ENCODE measurements at regions of chr16 and their contacts with region 1.

Region 1: DNA sequence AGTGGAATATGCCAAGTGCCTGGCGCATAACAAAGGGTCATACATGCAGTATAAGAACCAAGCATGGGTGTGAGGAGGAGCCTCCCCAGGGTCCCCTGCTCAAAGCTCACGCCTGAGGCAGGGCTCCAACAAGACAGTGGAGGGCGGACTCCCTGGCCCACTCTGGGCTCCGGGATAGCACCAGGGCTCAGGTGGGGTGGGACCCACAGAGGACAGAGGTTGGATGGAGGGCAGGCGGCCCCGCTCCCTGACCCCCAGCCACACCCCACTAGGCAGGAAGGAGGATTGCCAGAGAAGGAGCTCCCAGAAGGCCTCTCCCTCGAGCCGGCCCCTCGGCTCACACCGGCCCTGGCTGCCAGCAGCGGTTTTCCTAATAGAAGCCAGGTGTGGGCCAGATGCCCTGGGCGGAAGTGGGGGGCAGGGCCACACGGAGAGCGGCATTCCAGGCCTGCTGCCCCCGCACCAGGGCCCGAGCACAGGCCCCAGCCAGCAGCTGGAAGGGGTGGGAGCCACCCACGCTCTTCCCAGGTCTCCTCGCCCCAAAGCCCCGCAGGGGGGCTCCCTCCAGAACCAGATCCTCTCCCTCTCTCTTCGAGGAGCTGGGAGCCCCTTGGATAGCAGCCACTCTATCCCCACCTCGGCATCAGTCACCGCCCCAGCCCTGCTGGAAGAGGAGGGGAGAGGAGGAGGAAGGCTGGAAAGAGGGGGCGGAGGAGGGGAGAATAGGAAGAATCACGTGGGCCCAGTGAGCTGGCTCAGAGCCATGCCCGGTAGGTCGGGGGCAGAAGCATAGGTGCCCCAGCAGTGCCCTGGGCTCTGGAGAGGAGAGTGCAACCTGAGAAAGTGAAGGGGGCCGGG is 21.0 kb downstream of the VASN start:
- DNase-seq: peak; percentile 77 to 89 (median 84)
- H3K4me3 ChIP-seq: no peak overlapping the region
- H3K27ac ChIP-seq: peak overlapping the region; percentile 23 to 62
- H3K4me1 ChIP-seq: peaks cover 12% of the 10 kb centered on the region
- H3K27me3 ChIP-seq: no peaks in the 10 kb centered on the region
- CTCF ChIP-seq: no peak
- EP300 ChIP-seq: no peak
- POLR2A ChIP-seq: no peak

Region 2: DNA sequence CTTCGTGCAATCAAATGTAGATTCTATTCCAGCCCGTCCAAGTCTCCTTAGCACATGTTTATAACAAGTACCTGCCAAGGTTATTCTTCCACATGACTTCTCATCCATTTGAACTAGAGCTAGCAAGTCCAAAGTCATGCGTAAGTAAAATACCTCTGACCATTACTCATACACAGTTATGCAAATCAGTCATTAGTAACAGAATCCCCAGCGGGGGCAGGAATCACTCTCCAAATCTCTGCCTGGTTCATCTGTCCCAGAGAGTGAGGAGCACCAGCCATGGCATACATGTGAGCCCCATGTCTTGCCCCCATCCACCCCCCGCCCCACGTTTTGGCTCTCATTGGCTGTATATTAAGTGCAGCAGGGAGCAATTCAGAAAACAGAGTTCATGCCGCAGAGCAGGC is 178.4 kb before region 1 on chr16:
- intact Hi-C with region 1: loop called in 1 of 4 experiments (anchors 5 kb)
- DNase-seq: peak in 3 of 5 donors; percentile 54 to 66 (median 59)
- H3K4me3 ChIP-seq: no peak overlapping the region
- H3K27ac ChIP-seq: peak overlapping the region; percentile 23 to 48
- H3K4me1 ChIP-seq: peaks cover 9% of the 10 kb centered on the region
- H3K27me3 ChIP-seq: no peaks in the 10 kb centered on the region
- CTCF ChIP-seq: no peak
- EP300 ChIP-seq: peak; percentile 45
- POLR2A ChIP-seq: no peak

Region 3: GRCh38 chr16:4538350-4539235 is 146.0 kb after region 1 on chr16 and contains the start of gene CDIP1:
- intact Hi-C with region 1: no loop called
- DNase-seq: peak; percentile 98 to 99 (median 99)
- H3K4me3 ChIP-seq: peak within 1 kb of the TSS; percentile 52
- H3K27ac ChIP-seq: peak within 1 kb of the TSS; percentile 85 to 94
- H3K4me1 ChIP-seq: peaks cover 4% of the 10 kb centered on the region
- H3K27me3 ChIP-seq: no peaks in the 10 kb centered on the region
- CTCF ChIP-seq: peak in 2 of 3 donors; percentile 39 to 60
- EP300 ChIP-seq: peak; percentile 21
- POLR2A ChIP-seq: peak; percentile 89
- total RNA-seq, gene CDIP1: 14.6 to 55.1 (median 41.4) TPM

Measured in ovary (tissue), 10 donors.